RWPE1 (cell line): ENCODE measurements at regions of chr4 and their contacts with region 1.

Region 1: DNA sequence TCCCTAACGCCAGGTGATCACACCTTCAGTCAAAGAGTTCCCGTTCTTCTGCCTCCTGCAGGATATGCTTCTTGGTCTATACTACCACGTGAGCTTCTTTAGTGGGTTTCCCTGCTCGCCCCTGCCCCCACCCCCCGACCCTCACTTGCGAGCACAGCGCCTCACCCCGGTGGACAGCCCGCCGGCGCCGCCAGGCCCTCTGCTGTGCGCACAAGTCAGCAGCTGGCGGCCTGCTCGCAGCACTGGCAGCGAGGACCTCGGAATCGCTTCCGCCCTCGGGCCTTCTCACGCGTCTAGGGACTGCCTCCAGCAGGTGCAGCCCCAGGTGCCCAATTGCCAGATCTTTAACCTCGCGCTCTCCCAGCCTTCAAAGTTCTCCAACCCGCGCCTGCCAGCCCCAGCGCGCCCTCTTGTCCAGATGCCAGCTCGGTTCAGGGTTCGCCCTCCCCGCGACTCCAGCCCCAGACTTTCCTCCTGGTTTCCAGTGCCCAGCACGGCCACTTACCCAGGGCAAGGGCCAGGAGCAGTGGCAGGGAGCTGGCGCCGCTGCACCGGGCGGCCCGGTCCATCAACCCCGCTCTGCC is 474 bp downstream of the BTC start:
- DNase-seq: peak; percentile 24
- H3K27ac ChIP-seq: peak overlapping the region; percentile 39; the same call in 1 of the 2 replicates
- CTCF ChIP-seq: peak; percentile 33

Region 2: DNA sequence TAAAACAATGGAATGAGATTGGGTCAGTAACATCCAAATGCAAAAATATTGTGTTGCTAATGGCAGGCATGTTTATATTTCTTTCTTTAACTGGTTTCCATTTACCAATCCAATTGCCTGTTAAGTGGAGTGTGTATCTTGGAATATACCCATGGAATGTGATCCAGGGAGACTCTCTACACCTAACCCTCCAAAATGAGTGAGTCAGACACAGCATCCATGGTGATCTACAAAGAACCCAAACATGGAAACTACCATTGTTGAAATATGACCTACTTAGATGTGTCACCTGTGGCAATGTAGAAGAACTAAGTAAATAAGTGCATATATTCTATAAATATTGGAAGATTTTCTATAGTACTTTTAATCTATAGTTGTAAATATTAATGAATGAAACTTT is 238.6 kb before region 1 on chr4:
- CTCF ChIA-PET with region 1: no interaction called
- POLR2A ChIA-PET with region 1: interaction called, 14 read pairs
- DNase-seq: peak; percentile 50
- H3K27ac ChIP-seq: no peak overlapping the region
- CTCF ChIP-seq: no peak

Region 3: GRCh38 chr4:74768857-74769525 is 24.9 kb before region 1 on chr4:
- CTCF ChIA-PET with region 1: no interaction called
- POLR2A ChIA-PET with region 1: no interaction called
- DNase-seq: peak; percentile 29
- H3K27ac ChIP-seq: no peak overlapping the region
- CTCF ChIP-seq: no peak